Motor neuron (in vitro differentiated cells): ENCODE measurements at regions of chr3 and their contacts with region 1.

Region 1: DNA sequence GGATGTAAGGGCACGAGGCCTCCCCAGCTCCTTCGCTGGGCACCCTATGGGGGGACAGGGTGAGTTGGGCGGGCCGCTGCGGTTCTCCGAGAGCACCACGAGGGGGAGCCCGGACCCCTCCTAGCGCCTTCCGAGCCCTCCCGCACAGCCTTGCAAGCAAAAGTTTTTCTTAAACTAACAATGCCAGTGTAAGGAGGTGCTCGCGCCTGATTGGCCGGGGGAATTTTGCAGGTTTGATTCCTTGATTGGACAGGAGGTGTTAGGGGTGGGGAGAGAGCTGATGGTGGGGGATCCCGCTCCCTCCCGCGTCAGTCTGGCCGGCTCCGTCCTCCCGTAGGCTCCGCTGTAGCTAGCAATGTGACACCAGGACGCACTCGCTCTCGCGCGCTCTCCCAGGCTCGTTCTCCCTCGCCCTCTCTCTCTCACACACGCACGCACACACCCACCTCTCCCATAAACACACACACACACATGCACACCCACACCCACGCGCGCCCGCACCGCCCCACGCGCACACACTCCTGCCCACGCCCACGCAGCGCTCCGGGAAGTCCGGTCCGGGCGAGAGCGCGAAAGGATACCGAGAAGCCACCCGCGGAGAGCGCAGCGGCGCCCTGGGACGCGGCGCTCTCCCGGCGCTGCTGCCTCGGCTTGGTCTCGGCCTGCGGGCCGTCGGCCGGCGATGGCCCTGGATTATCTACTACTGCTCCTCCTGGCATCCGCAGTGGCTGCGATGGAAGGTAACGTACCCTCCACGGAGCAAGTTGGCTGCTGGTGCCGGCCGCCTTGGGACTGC is at the start of gene EPHB1:
- ATAC-seq: peak; percentile 79 to 96 (median 84)
- H3K4me3 ChIP-seq: peak within 1 kb of the TSS; percentile 51 to 64 (median 61)
- H3K27ac ChIP-seq: peak within 1 kb of the TSS in 1 of 2 donors; percentile 49
- H3K4me1 ChIP-seq: peaks cover 20% of the 10 kb centered on the region in 2 donors
- total RNA-seq, gene EPHB1: 0.31 to 21.1 (median 13.7) TPM in 7 of 8 experiments, not detected in the other

Region 2: DNA sequence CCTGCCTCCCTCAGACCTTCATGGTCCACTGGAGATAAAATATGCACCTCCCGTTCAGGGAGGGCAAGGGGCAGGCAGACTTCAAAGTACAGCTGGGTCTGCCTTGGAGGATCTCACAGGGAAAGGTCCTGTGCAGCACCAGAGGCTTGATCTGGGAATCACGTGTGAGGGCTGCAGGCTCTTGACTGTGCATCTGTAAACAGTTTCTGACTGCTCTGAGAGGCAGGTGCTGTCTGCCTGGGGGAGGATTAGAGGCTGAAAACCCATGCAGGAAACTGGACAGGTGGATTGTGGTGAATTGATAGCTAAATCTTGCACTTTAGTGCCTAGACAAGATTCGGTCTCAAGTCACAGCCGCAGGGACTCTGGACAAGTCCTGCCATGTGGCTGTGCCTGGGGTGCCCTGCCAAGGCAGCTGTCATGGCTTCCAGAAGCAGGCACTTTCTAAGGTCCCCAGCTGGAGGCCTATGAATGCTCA is 239.2 kb after region 1 on chr3:
- in situ Hi-C with region 1: no loop called
- ATAC-seq: peak in 6 of 8 experiments; percentile 25 to 96 (median 96)
- H3K4me3 ChIP-seq: no peak overlapping the region
- H3K27ac ChIP-seq: peak overlapping the region; percentile 10 to 26
- H3K4me1 ChIP-seq: peaks cover 48 to 56% of the 10 kb centered on the region in 2 donors

Region 3: GRCh38 chr3:135412480-135412879 is 617.3 kb after region 1 on chr3:
- in situ Hi-C with region 1: no loop called
- ATAC-seq: no peak
- H3K4me3 ChIP-seq: no peak overlapping the region
- H3K27ac ChIP-seq: no peak overlapping the region
- H3K4me1 ChIP-seq: no peaks in the 10 kb centered on the region

Region 4: GRCh38 chr3:135456108-135456790 is 661.1 kb after region 1 on chr3:
- in situ Hi-C with region 1: loop called in 1 of 9 experiments (anchors 25 kb)
- ATAC-seq: peak; percentile 18 to 97 (median 96)
- H3K4me3 ChIP-seq: peak overlapping the region in 3 of 5 donors; percentile 2 to 4 (median 2)
- H3K27ac ChIP-seq: peak overlapping the region; percentile 53 to 72
- H3K4me1 ChIP-seq: peaks cover 25 to 29% of the 10 kb centered on the region in 2 donors

Region 5: GRCh38 chr3:135503760-135504686 is 708.9 kb after region 1 on chr3:
- in situ Hi-C with region 1: loop called in 3 of 9 experiments (anchors 25 kb)
- ATAC-seq: peak; percentile 97 to 99 (median 98)
- H3K4me3 ChIP-seq: no peak overlapping the region
- H3K27ac ChIP-seq: peak overlapping the region in 1 of 2 donors; percentile 12
- H3K4me1 ChIP-seq: peaks cover 13 to 24% of the 10 kb centered on the region in 2 donors

Region 6: DNA sequence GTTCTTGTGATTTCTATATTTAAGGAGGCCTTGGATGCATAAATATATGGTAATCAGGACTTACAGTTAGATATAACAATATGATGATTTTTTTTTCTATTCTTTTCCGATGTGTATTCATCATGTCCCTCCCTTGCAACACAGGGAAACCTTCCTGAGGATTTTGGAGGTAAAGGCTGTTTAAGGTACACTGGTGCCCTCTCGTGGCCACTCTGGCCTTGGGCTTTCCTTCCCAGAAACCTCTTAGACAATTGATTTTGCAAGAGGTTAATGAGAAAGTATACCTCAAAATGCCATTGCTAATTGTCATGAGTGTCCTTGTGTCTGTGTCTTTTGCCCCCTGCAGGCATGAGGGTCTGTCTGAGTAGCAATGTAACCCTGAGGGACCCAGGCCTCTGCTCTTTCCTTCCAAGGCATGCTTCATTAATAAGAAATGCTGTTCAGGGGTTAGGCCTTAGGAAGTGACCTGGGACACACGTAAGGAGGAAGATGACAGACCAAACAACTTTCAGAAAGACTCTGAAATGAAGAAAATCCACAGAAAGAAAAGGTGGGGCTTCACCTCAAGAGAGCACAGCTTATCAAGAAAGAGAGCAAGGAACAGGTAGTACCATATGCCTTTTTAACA is 1100.1 kb after region 1 on chr3:
- in situ Hi-C with region 1: loop called in 4 of 9 experiments (anchors 10 to 25 kb)
- ATAC-seq: peak; percentile 73 to 82 (median 80)
- H3K4me3 ChIP-seq: no peak overlapping the region
- H3K27ac ChIP-seq: no peak overlapping the region
- H3K4me1 ChIP-seq: peaks cover 10 to 11% of the 10 kb centered on the region in 2 donors